Tibial artery (tissue), 4 donors: ENCODE measurements at regions of chr1 and their contacts with region 1.

Region 1: DNA sequence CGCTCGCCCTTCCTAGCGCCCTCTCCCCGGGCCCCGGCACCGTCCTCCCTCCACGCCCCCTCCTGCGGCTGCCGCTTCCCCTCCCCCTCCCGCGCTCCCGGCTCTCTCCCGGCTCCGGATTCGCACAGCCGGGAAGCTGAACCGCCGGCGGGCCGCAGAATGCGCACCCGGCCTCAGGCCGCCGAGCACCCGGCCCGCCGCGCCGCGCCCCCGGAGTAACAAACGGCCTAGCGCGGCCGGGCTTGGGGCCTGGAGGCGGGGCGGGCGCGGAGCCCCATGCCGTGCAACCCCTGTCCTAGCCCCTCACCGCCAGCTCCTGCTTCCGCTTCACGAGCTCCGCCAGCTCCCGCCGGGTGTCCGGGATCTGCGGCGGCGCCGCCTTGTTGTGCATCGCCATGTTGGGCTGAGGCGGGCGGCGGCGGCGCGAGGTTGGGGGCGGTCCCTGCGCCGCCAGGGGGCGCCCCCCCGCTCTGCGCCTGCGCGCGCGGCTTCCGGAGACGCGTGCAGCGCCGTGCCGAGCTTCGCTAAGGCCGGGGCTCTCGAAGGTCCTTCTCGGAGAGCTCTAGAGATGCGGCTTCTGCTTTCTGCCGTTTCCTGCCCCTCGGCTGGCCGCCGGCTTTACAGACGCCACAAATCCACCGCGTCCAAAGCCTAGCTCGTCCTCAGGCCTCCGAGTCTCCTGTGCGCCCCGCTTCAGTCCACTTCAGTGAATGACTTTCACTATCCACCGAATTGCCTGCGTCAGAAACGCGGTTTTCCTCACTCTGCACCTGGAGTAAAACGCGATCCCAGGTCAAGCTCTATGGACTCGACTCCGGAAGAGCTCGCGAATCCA is at the start of gene MEAF6:
- DNase-seq: peak; percentile 75 to 88
- H3K4me3 ChIP-seq: peak within 1 kb of the TSS; percentile 83 to 97
- H3K27ac ChIP-seq: peak within 1 kb of the TSS; percentile 86 to 89
- H3K4me1 ChIP-seq: peaks cover 0 to 29% (median 19%) of the 10 kb centered on the region in 4 donors
- H3K27me3 ChIP-seq: no peaks in the 10 kb centered on the region
- CTCF ChIP-seq: peak; percentile 72 to 84

Region 2: GRCh38 chr1:37556712-37557196 is 42.2 kb after region 1 on chr1 and contains the start of gene DNALI1:
- intact Hi-C with region 1: loop called (anchors 2 kb)
- DNase-seq: peak; percentile 76 to 92
- H3K4me3 ChIP-seq: peak within 1 kb of the TSS; percentile 41 to 45
- H3K27ac ChIP-seq: peak within 1 kb of the TSS; percentile 43 to 65
- H3K4me1 ChIP-seq: peaks cover 0 to 35% (median 23%) of the 10 kb centered on the region in 4 donors
- H3K27me3 ChIP-seq: no peaks in the 10 kb centered on the region
- CTCF ChIP-seq: no peak

Region 3: DNA sequence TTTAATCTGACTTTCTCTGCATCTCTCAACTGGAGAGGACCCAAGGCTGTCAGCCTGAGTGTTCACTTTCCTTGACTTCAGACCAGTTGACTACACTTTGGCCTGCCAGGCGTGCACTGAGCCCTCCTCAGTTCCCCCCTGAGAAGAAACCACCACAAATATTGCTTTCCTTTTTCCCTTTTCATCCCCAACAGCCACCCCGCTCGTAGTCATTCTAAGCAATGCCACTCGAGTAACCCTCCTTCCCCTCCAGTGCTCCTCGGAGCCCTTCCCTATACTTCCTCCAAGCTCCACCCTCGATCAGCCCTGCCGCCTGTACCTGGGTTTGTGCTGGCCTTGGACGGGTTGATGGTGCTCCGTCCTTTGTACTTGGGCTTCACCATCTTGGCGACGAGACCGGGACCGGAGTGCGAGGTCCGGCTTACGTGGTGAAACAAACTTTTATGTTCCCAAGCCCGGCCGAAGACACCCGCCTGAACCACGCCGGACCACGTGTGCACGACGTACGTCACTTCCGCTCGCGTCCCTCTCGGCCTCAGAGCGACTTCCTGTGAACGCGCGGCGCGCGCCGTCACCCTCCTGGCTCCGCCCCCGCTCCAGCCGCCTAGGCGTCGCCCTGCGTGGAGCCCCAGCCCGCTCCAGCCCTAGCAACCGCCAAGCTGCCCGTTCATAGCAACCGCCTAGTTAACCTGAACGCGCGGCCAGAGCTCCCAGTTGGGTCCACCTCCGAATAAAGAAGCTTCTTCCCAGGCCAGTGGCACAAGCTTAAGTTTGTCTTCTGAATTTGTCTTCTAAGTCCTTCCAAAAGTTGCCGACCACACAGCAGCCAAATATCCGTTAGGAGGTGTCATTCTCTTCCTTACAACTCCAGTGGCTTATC is 81.1 kb after region 1 on chr1 and contains the start of gene GNL2:
- intact Hi-C with region 1: loop called (anchors 10 kb)
- DNase-seq: peak; percentile 97 to 98
- H3K4me3 ChIP-seq: peak within 1 kb of the TSS; percentile 69 to 72
- H3K27ac ChIP-seq: peak within 1 kb of the TSS; percentile 79 to 82
- H3K4me1 ChIP-seq: peaks cover 0 to 28% (median 24%) of the 10 kb centered on the region in 4 donors
- H3K27me3 ChIP-seq: no peaks in the 10 kb centered on the region
- CTCF ChIP-seq: no peak

Region 4: GRCh38 chr1:37905727-37906126 is 391.2 kb after region 1 on chr1:
- intact Hi-C with region 1: no loop called
- DNase-seq: no peak
- H3K4me3 ChIP-seq: no peak overlapping the region
- H3K27ac ChIP-seq: peak overlapping the region in 1 of 2 donors; percentile 55
- H3K4me1 ChIP-seq: peaks cover 0 to 41% (median 7%) of the 10 kb centered on the region in 4 donors
- H3K27me3 ChIP-seq: no peaks in the 10 kb centered on the region
- CTCF ChIP-seq: no peak

Region 5: GRCh38 chr1:38586993-38587646 is 1072.6 kb after region 1 on chr1:
- intact Hi-C with region 1: no loop called
- DNase-seq: no peak
- H3K4me3 ChIP-seq: no peak overlapping the region
- H3K27ac ChIP-seq: no peak overlapping the region
- H3K4me1 ChIP-seq: no peaks in the 10 kb centered on the region
- H3K27me3 ChIP-seq: peaks cover 0 to 37% of the 10 kb centered on the region in 2 donors
- CTCF ChIP-seq: peak; percentile 33 to 46